Mammary epithelial cell (primary cell): ENCODE measurements at regions of chr10 and their contacts with region 1.

Region 1: DNA sequence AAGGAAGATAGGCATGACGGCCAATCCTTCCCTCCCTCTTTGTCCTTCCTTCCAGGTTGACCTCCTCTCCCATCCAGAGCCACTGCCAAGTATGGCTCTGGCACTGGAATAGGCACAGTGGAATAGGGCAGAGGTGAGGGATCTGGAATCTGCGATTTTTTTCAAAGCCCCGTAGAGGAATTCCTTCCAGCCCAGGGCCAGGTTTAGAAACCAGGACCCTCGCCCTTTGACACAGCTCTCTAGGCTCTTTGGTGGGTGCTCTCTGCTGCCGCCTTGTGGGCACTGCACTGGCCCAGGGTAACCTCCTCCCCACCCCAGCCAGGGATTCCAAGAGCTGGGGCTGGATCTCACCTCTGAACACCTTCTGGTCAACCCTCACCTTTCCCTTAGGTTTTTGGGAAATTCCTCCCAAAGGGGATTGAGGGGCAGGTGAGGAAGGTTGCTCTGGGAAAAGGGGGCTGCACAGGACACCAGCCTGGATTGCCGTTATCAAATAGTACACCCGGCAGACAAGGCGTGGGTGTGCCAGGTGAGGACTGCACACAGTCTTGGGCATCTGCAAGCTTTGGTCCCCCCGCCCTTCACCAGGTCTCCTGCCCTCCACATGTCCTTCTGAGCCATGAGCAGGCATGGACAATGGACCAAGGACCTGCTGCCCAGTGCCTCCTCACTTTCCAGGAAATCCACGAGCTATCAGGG is 22.8 kb downstream of the C10orf105 start:
- DNase-seq: no peak
- H3K4me3 ChIP-seq: no peak overlapping the region
- H3K27ac ChIP-seq: no peak overlapping the region
- H3K4me1 ChIP-seq: peaks cover 6% of the 10 kb centered on the region
- H3K27me3 ChIP-seq: no peaks in the 10 kb centered on the region
- CTCF ChIP-seq: peak; percentile 84 to 97

Region 2: DNA sequence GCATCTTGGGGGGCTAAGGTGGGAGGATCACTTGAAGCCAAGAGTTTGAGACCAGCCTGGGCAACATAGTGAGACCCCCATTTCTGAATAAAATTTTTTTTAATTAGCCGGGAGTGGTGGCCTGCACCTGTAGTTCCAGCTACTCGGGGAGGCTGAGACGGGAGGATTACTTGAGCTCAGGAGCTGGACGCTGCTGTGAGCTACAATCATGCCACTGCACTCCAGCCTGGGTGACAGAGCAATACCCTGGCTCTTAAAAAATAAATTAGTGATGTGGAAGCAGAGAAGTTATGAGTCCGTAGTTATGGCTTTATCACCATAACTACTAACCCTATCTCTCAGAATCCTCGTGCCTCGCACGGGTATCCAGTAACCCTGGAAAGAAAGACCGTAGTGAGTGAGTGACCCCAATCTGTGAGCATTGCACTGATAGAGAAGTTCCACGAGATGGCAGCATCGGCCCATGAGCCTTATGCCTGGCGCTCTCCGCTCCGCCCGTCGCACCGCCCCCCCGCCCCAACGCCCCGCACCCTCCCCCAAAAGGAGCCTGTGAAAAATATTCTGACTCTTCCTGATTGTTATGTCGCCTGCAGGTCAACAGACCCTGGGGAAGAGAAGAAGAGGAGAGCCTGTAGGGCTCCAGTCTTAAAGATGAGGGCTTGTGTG is 382.6 kb before region 1 on chr10:
- CTCF ChIA-PET with region 1: no interaction called
- dilution Hi-C with region 1: no loop called
- in situ Hi-C with region 1: loop called in 1 of 2 experiments (anchors 10 kb)
- intact Hi-C with region 1: loop called (anchors 2 kb)
- DNase-seq: no peak
- H3K4me3 ChIP-seq: no peak overlapping the region
- H3K27ac ChIP-seq: no peak overlapping the region
- H3K4me1 ChIP-seq: no peaks in the 10 kb centered on the region
- H3K27me3 ChIP-seq: no peaks in the 10 kb centered on the region
- CTCF ChIP-seq: peak; percentile 67 to 76

Region 3: DNA sequence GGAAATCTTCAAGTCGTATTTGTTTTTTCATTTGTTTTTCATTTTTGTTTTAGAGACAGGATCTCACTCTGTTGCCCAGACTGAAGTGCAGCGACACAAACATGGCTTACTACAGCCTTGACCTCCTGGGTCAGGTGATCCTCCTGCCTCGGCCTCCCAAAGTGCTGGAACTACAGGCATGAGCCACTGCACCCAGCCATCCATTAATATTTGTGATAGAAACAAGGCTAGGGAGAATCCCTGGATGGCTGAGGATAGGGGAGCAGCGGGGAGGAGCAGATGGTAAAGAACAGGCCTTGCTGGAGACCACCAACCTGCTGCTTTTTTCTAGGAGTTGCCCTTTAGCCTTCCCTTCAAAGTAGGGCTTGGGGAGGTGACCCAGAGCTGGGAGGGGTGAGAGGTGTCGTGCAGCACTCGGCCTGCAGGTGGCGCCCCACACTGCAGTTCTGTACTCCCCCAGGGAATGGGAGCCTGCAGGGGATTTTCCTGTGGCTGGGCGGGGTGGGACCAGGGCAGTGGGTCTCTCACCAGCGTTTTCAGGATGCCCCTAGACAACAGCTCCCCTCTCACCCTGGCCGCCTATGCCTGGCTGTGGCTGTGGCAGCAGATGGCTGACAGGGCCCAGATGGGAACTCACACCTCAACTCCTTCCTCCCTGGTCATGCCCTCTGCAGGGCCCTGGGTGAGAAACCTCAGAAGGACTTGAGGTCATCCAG is 312.6 kb before region 1 on chr10:
- CTCF ChIA-PET with region 1: no interaction called
- dilution Hi-C with region 1: no loop called
- in situ Hi-C with region 1: no loop called
- intact Hi-C with region 1: loop called (anchors 2 kb)
- DNase-seq: no peak
- H3K4me3 ChIP-seq: no peak overlapping the region
- H3K27ac ChIP-seq: no peak overlapping the region
- H3K4me1 ChIP-seq: no peaks in the 10 kb centered on the region
- H3K27me3 ChIP-seq: no peaks in the 10 kb centered on the region
- CTCF ChIP-seq: peak; percentile 93 to 94

Region 4: GRCh38 chr10:71766702-71767419 is 70.1 kb after region 1 on chr10:
- CTCF ChIA-PET with region 1: interaction called, 10 read pairs
- dilution Hi-C with region 1: no loop called
- in situ Hi-C with region 1: no loop called
- intact Hi-C with region 1: loop called (anchors 2 kb)
- DNase-seq: peak; percentile 89
- H3K4me3 ChIP-seq: no peak overlapping the region
- H3K27ac ChIP-seq: peak overlapping the region; percentile 92
- H3K4me1 ChIP-seq: peaks cover 57% of the 10 kb centered on the region
- H3K27me3 ChIP-seq: no peaks in the 10 kb centered on the region
- CTCF ChIP-seq: no peak

Region 5: DNA sequence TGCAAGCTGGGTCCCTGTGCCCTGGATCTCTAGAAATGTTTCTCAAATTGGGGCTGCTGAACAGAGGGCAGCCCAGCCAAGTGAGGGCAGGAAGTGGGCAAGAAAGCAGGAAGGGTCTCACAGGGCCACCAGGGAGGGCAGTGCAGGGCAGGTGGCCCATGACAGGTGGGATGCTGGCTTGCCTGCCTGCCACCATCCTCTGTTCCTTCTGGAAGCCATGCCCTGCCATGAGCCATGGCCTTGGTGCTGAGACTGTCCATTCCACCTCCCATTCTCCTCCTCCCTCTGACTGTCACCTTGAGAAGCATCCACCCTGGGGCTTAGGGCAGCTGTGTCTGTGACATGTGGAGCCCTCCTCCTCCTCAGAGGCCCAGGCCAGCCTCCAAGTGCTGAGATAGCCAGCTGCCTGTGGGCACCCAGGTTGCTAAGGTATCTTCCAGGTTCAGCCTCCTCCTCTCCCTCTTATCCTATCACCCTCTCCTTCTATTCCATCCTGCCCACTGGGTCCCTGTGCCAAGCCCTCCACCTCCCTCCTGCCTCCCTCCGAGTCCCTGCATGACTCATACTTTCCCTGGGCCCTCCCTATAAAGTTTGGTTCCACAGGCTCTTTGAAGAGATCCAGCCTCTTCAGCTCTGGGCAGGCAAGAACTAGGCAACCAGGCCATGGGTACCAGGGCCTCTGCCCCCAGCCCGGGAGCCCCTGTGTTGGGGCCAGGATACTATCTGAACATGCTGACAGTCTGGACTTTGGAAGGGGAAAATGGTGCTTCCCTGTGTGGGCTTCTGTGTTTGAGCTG is 75.2 kb after region 1 on chr10:
- CTCF ChIA-PET with region 1: interaction called, 10 read pairs
- dilution Hi-C with region 1: no loop called
- in situ Hi-C with region 1: no loop called
- intact Hi-C with region 1: loop called (anchors 2 kb)
- DNase-seq: peak; percentile 78
- H3K4me3 ChIP-seq: peak overlapping the region; percentile 73 to 78 (median 75)
- H3K27ac ChIP-seq: peak overlapping the region; percentile 86
- H3K4me1 ChIP-seq: peaks cover 61% of the 10 kb centered on the region
- H3K27me3 ChIP-seq: no peaks in the 10 kb centered on the region
- CTCF ChIP-seq: no peak

Region 6: GRCh38 chr10:71812016-71812912 is 115.5 kb after region 1 on chr10:
- CTCF ChIA-PET with region 1: no interaction called
- dilution Hi-C with region 1: no loop called
- in situ Hi-C with region 1: no loop called
- intact Hi-C with region 1: loop called (anchors 5 kb)
- DNase-seq: peak; percentile 29
- H3K4me3 ChIP-seq: no peak overlapping the region
- H3K27ac ChIP-seq: no peak overlapping the region
- H3K4me1 ChIP-seq: no peaks in the 10 kb centered on the region
- H3K27me3 ChIP-seq: no peaks in the 10 kb centered on the region
- CTCF ChIP-seq: peak; percentile 64 to 88